Adrenal gland (tissue), 19 donors: ENCODE measurements at regions of chr17 and their contacts with region 1.

Region 1: GRCh38 chr17:81821603-81822311 is 11.3 kb downstream of the MCRIP1 start:
- DNase-seq: peak; percentile 88 to 97 (median 95)
- H3K4me3 ChIP-seq: no peak overlapping the region
- H3K27ac ChIP-seq: peak overlapping the region; percentile 77 to 93 (median 85)
- H3K4me1 ChIP-seq: peaks cover 14 to 15% of the 10 kb centered on the region in 2 donors
- H3K27me3 ChIP-seq: no peaks in the 10 kb centered on the region
- CTCF ChIP-seq: peak; percentile 63 to 89 (median 78)
- POLR2A ChIP-seq: no peak

Region 2: GRCh38 chr17:81859906-81860755 is 38.4 kb after region 1 on chr17 and contains the start of gene P4HB:
- intact Hi-C with region 1: loop called in 1 of 2 experiments (anchors 5 kb)
- DNase-seq: peak in 4 of 7 donors; percentile 45 to 56 (median 50)
- H3K4me3 ChIP-seq: peak within 1 kb of the TSS; percentile 53 to 98 (median 82)
- H3K27ac ChIP-seq: peak within 1 kb of the TSS; percentile 95 to 100 (median 98)
- H3K4me1 ChIP-seq: peaks cover 24 to 57% of the 10 kb centered on the region in 2 donors
- H3K27me3 ChIP-seq: no peaks in the 10 kb centered on the region
- CTCF ChIP-seq: no peak
- POLR2A ChIP-seq: peak; percentile 87 to 95
- total RNA-seq, gene P4HB: 583 to 2,018 (median 1,095) TPM

Region 3: DNA sequence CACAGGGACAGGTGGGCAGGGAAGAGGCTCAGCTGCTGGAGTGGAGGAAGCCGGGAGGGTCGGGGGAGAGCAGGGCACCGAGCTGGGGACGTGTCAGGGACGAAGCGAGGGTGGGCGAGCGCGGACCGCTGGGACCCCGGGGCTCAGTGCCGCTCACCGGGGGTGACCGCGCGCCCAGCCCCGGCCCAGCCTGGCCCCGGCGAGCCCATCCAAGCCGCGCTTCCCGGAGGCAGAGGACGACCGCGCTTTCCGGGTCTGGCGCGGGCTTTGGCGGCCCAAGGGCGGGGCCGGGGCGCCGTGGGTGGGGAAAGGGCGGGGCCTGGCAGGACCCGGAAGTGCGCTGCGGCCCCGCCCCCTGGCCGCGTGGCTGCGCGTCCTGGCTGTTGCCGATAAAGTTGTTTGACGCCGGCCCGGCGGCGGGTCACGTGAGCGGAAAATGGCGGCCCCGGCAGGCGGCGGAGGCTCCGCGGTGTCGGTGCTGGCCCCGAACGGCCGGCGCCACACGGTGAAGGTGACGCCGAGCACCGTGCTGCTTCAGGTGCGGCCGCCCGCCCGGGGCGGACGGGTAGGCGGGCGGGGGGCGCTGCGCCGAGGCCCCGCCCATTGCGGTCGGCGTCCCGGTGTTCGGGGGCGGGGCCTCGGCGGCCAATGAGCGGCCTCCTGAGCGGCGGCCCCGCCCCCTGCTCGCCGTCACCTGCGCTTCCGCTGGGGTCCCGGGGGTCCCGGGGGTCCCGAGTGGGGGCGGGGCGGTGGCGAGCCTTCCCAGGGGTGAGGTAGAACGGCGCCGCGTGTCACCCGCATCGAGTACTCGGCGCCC is 155.7 kb after region 1 on chr17 and contains the start of gene ASPSCR1:
- intact Hi-C with region 1: no loop called
- DNase-seq: peak; percentile 90 to 94 (median 93)
- H3K4me3 ChIP-seq: peak within 1 kb of the TSS; percentile 29 to 99 (median 86)
- H3K27ac ChIP-seq: peak within 1 kb of the TSS; percentile 31 to 97 (median 86)
- H3K4me1 ChIP-seq: peaks cover 5 to 17% of the 10 kb centered on the region in 2 donors
- H3K27me3 ChIP-seq: no peaks in the 10 kb centered on the region
- CTCF ChIP-seq: no peak
- POLR2A ChIP-seq: peak; percentile 58 to 75
- total RNA-seq, gene ASPSCR1: 19.9 to 45.9 (median 27.5) TPM